A673 (cell line): ENCODE measurements at regions of chr2 and their contacts with region 1.

Region 1: GRCh38 chr2:193584522-193584938 is 1389.8 kb upstream of the TMEFF2 start:
- DNase-seq: peak; percentile 79
- H3K4me3 ChIP-seq: no peak overlapping the region
- H3K27ac ChIP-seq: no peak overlapping the region
- H3K4me1 ChIP-seq: peaks cover 16% of the 10 kb centered on the region
- H3K27me3 ChIP-seq: no peaks in the 10 kb centered on the region
- CTCF ChIP-seq: peak; percentile 67

Region 2: DNA sequence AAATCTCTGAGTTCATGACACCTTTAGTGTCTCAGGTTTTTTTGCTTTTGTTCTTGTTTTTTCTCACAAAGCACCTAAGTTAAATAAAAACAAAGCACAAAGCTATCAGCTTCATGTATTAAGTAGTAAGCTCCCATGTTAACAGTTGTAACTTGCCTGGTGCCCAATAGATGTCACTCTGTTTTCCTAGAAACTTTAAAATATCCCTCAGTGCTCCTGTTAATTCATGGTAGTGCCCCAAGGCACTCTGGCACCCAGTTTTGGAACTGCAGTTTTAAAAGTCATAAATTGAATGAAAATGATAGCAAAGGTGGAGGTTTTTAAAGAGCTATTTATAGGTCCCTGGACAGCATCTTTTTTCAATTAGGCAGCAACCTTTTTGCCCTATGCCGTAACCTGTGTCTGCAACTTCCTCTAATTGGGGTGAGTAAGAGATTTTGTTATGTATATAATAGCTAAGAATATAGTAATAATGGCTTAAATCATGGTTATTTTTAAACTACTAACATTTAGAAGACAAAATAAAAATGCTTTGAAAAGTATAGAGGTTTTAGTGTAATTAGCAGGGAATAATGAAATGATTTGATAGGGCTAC is 834.8 kb before region 1 on chr2:
- CTCF ChIA-PET with region 1: interaction called, 5 read pairs
- POLR2A ChIA-PET with region 1: no interaction called
- intact Hi-C with region 1: loop called (anchors 5 kb)
- DNase-seq: peak; percentile 72
- H3K4me3 ChIP-seq: no peak overlapping the region
- H3K27ac ChIP-seq: no peak overlapping the region
- H3K4me1 ChIP-seq: peaks cover 16% of the 10 kb centered on the region
- H3K27me3 ChIP-seq: no peaks in the 10 kb centered on the region
- CTCF ChIP-seq: peak; percentile 71

Region 3: DNA sequence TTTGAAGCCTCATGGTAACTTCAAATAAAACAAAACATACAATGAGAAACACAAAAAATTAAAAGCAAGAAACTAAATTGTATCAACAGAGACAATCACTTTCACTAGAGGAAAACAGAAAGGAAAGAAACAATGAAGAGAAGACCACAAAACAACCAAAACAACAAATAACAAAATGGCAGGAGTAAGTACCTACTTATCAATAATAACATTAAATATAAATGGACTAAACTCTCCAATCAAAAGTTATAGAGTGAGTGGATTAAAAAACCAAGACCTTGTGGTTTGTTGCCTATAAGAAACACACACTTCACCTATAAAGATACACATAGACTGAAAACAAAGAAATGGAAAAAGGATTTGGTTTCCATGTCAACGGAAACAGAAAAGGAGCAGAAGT is 559.7 kb before region 1 on chr2:
- CTCF ChIA-PET with region 1: no interaction called
- POLR2A ChIA-PET with region 1: no interaction called
- intact Hi-C with region 1: no loop called
- DNase-seq: no peak
- H3K4me3 ChIP-seq: no peak overlapping the region
- H3K27ac ChIP-seq: no peak overlapping the region
- H3K4me1 ChIP-seq: no peaks in the 10 kb centered on the region
- H3K27me3 ChIP-seq: no peaks in the 10 kb centered on the region
- CTCF ChIP-seq: no peak

Region 4: DNA sequence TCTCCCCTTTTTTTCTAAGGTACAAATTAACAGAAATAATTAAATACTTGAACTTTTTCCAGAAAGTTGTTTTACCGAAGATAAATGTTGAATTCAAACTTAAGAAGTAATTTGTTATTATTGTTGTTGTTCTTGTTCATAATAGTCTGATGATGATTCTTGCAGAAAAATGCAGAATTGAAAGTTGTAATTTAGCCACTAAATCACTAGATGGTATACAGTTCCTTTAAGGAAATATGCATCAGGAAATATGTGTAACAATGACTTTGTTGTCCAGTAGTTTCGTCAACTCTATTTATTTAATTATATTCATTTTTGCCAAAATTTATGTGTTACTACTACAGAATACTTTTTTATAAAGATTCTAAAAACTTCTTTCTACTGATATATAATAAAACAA is 473.0 kb before region 1 on chr2:
- CTCF ChIA-PET with region 1: no interaction called
- POLR2A ChIA-PET with region 1: no interaction called
- intact Hi-C with region 1: loop called (anchors 10 kb)
- DNase-seq: no peak
- H3K4me3 ChIP-seq: no peak overlapping the region
- H3K27ac ChIP-seq: no peak overlapping the region
- H3K4me1 ChIP-seq: peaks cover 4% of the 10 kb centered on the region
- H3K27me3 ChIP-seq: no peaks in the 10 kb centered on the region
- CTCF ChIP-seq: no peak; the same call in 1 of the 2 replicates

Region 5: DNA sequence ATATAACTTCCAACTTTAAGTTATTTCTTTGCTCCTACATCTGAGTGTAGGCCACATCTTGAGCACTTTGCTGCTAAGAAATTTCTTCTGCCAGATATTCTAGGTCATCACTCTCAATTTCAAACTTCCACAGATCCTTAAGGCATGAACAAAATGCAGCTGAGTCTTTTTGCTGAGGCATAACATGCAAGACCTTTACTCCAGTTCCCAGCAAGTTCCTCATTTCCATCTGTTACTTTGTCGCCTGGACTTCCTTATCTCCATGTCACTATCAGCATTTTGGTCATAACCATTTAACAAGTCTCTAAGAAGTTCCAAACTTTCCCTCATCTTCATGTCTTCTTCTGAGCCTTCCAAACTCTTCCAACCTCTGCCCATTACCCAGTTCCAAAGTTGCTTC is 312.5 kb before region 1 on chr2:
- CTCF ChIA-PET with region 1: no interaction called
- POLR2A ChIA-PET with region 1: no interaction called
- intact Hi-C with region 1: loop called (anchors 10 kb)
- DNase-seq: no peak
- H3K4me3 ChIP-seq: no peak overlapping the region
- H3K27ac ChIP-seq: no peak overlapping the region
- H3K4me1 ChIP-seq: no peaks in the 10 kb centered on the region
- H3K27me3 ChIP-seq: no peaks in the 10 kb centered on the region
- CTCF ChIP-seq: no peak

Region 6: GRCh38 chr2:193824474-193824873 is 239.9 kb after region 1 on chr2:
- CTCF ChIA-PET with region 1: no interaction called
- POLR2A ChIA-PET with region 1: no interaction called
- intact Hi-C with region 1: no loop called
- DNase-seq: peak; percentile 0
- H3K4me3 ChIP-seq: no peak overlapping the region
- H3K27ac ChIP-seq: no peak overlapping the region
- H3K4me1 ChIP-seq: no peaks in the 10 kb centered on the region
- H3K27me3 ChIP-seq: no peaks in the 10 kb centered on the region
- CTCF ChIP-seq: no peak